Activated CD4-positive, alpha-beta T cell treated with anti-CD3 and anti-CD28 coated beads for 36 hours (primary cell): ENCODE measurements at regions of chr12 and their contacts with region 1.

Region 1: GRCh38 chr12:53625946-53626701 is at the start of gene ATF7:
- DNase-seq: peak; percentile 99
- ATAC-seq: peak; percentile 96
- H3K4me3 Mint-ChIP-seq: peak within 1 kb of the TSS; percentile 95
- H3K27ac Mint-ChIP-seq: peak within 1 kb of the TSS; percentile 84
- H3K4me1 Mint-ChIP-seq: peaks cover 35% of the 10 kb centered on the region
- H3K27me3 Mint-ChIP-seq: no peaks in the 10 kb centered on the region
- total RNA-seq, gene ATF7: 23.0 to 28.1 TPM

Region 2: DNA sequence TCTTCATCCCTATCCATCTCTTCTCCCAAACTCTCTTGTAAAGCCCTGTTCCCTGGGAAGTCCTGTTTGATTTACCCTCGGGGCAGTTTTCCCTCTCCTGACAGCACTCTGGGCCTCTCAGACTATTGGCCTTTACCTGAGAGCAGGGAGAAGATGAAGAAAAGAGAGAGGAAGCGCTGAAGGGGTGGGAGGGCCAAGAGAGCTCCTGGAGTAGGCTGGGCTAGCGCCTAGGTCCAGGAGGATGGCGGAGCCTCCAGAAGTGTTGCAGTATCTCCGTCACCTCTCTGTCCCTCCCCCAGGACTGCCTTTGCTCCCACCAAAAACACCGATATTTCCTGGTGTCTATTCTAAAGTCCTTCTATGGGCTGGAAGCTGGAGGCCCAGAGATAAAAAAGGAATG is 534.4 kb before region 1 on chr12:
- CTCF ChIA-PET with region 1: no interaction called
- POLR2A ChIA-PET with region 1: no interaction called
- intact Hi-C with region 1: no loop called
- DNase-seq: no peak
- ATAC-seq: no peak
- H3K4me3 Mint-ChIP-seq: no peak overlapping the region
- H3K27ac Mint-ChIP-seq: no peak overlapping the region
- H3K4me1 Mint-ChIP-seq: peaks cover under 1% of the 10 kb centered on the region
- H3K27me3 Mint-ChIP-seq: peaks cover 9% of the 10 kb centered on the region

Region 3: DNA sequence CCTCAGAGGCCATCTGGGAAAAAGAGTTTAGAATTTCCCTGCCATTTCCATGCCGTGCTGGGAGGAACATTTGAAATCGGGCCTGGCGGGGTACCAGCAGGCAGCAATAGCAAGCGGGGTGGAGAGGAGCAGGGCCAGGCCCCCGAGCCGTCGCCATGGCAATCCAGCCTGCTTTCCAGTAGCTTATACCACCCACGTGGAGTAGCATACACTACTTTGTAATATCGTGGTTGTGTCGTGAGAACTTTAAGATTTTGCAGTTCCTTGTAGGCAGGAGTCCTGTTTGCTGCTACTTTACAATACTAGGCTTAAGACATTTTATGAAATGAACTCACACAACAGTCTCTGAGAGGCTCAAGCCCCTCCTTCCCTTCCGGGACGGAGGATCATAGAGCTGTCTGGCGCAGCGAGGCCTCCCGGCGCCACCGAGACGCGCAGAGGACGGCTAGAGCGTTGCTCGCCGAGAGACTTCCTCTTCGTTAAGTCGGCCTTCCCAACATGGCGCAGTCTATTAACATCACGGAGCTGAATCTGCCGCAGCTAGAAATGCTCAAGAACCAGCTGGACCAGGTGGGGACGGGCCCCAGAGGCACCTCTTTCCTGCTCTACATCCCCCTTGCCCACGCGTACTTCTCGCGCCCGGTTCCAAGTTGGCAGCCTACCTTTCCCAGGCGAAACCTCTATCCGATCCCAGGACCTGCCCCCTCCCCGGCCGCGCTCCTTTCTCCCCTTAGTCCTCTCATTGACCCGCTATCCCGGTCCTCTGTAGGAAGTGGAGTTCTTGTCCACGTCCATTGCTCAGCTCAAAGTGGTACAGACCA is 330.8 kb before region 1 on chr12 and contains the start of gene PFDN5:
- CTCF ChIA-PET with region 1: no interaction called
- POLR2A ChIA-PET with region 1: no interaction called
- intact Hi-C with region 1: loop called in 1 of 2 experiments (anchors 1 kb)
- DNase-seq: peak; percentile 93
- ATAC-seq: peak; percentile 88
- H3K4me3 Mint-ChIP-seq: peak within 1 kb of the TSS; percentile 85
- H3K27ac Mint-ChIP-seq: peak within 1 kb of the TSS; percentile 94
- H3K4me1 Mint-ChIP-seq: peaks cover 52% of the 10 kb centered on the region
- H3K27me3 Mint-ChIP-seq: no peaks in the 10 kb centered on the region
- total RNA-seq, gene PFDN5: 253 to 322 TPM

Region 4: DNA sequence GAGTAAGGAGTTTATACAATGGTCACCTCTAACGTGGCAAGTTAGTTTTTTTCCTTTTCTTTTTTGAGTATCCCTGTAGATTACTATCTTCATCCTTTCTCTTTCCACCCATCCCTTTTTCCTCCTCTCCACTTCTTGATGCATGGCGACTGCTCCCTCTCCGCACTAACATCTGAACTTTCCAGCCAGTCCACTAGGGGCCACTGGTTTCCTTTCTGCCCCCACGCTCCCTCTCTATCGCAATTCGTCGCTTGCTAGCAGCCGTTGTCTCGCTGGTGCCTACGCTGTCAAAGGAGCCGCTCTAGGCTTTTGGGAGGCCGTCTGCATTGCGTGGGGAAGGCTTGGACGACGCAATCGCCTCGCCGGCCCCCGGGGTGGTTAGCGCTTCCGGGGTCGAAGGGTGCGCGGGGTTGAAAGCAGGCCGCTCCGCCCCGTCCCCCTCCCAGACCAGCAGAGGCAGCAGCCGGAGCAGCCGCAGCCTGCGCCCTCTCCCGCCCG is 174.4 kb before region 1 on chr12 and contains the start of gene PCBP2:
- CTCF ChIA-PET with region 1: no interaction called
- POLR2A ChIA-PET with region 1: no interaction called
- intact Hi-C with region 1: loop called in 1 of 2 experiments (anchors 1 kb)
- DNase-seq: peak; percentile 99
- ATAC-seq: peak; percentile 97
- H3K4me3 Mint-ChIP-seq: peak within 1 kb of the TSS; percentile 94
- H3K27ac Mint-ChIP-seq: peak within 1 kb of the TSS; percentile 96
- H3K4me1 Mint-ChIP-seq: peaks cover 27% of the 10 kb centered on the region
- H3K27me3 Mint-ChIP-seq: no peaks in the 10 kb centered on the region
- total RNA-seq, gene PCBP2: 881 to 999 TPM

Region 5: GRCh38 chr12:53500776-53501614 is 125.1 kb before region 1 on chr12 and contains the start of gene TARBP2:
- CTCF ChIA-PET with region 1: interaction called, 3 read pairs
- POLR2A ChIA-PET with region 1: interaction called, 4 read pairs
- intact Hi-C with region 1: loop called in 1 of 2 experiments (anchors 1 kb)
- DNase-seq: peak; percentile 98
- ATAC-seq: peak; percentile 84
- H3K4me3 Mint-ChIP-seq: peak within 1 kb of the TSS; percentile 81
- H3K27ac Mint-ChIP-seq: peak within 1 kb of the TSS; percentile 98
- H3K4me1 Mint-ChIP-seq: peaks cover 31% of the 10 kb centered on the region
- H3K27me3 Mint-ChIP-seq: no peaks in the 10 kb centered on the region
- total RNA-seq, gene TARBP2: 28.3 to 30.2 TPM

Region 6: GRCh38 chr12:53514628-53515290 is 111.4 kb before region 1 on chr12:
- CTCF ChIA-PET with region 1: no interaction called
- POLR2A ChIA-PET with region 1: no interaction called
- intact Hi-C with region 1: no loop called
- DNase-seq: no peak
- ATAC-seq: no peak
- H3K4me3 Mint-ChIP-seq: no peak overlapping the region
- H3K27ac Mint-ChIP-seq: no peak overlapping the region
- H3K4me1 Mint-ChIP-seq: no peaks in the 10 kb centered on the region
- H3K27me3 Mint-ChIP-seq: no peaks in the 10 kb centered on the region

Region 7: GRCh38 chr12:53561590-53561953 is 64.6 kb before region 1 on chr12:
- CTCF ChIA-PET with region 1: interaction called, 3 read pairs
- POLR2A ChIA-PET with region 1: interaction called, 3 read pairs
- intact Hi-C with region 1: loop called (anchors 1 to 5 kb)
- DNase-seq: no peak
- ATAC-seq: peak; percentile 93
- H3K4me3 Mint-ChIP-seq: no peak overlapping the region
- H3K27ac Mint-ChIP-seq: peak overlapping the region; percentile 76
- H3K4me1 Mint-ChIP-seq: peaks cover 63% of the 10 kb centered on the region
- H3K27me3 Mint-ChIP-seq: no peaks in the 10 kb centered on the region

Region 8: GRCh38 chr12:53613821-53614220 is 12.3 kb before region 1 on chr12:
- CTCF ChIA-PET with region 1: interaction called, 16 read pairs
- POLR2A ChIA-PET with region 1: interaction called, 12 read pairs
- intact Hi-C with region 1: no loop called
- DNase-seq: no peak
- ATAC-seq: no peak
- H3K4me3 Mint-ChIP-seq: no peak overlapping the region
- H3K27ac Mint-ChIP-seq: no peak overlapping the region
- H3K4me1 Mint-ChIP-seq: peaks cover 29% of the 10 kb centered on the region
- H3K27me3 Mint-ChIP-seq: no peaks in the 10 kb centered on the region

Region 9: DNA sequence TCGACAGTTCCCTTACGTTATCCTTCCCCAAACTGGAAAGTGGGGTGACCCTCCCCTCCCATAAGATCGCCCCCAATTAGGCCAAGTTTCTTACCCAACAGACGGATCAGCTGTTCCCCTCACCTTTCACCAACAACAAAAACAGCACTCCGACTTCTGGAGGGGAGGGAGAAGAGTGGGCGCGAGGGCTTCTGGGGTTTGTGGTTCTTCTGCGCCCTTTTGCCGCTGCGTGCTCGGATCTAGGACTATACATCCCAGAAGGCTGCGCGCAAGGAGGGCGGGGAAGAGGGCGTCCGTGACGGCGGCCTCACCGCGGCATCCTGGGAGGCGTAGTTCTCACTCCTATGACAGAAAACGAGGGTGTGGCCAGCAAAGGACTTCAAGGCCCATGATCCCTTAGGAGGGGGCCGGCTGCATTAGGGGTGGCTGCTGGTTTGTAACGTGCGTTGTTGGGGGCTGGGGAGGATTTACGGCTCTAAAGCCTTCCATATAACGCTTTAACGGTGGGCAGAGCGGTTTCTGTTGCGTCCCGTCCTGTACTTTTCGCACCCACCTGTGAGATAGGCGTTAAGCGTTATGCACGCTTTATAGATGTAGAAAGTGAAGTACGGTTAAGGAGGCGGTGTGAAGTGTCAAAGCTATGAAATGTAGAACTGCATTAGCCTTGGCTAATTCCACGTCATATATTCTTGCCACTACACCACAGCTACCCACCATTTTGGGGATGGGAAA is 101.4 kb after region 1 on chr12 and contains the start of gene CALCOCO1:
- CTCF ChIA-PET with region 1: no interaction called
- POLR2A ChIA-PET with region 1: no interaction called
- intact Hi-C with region 1: loop called (anchors 1 kb)
- DNase-seq: peak; percentile 99
- ATAC-seq: peak; percentile 99
- H3K4me3 Mint-ChIP-seq: peak within 1 kb of the TSS; percentile 80
- H3K27ac Mint-ChIP-seq: peak within 1 kb of the TSS; percentile 73
- H3K4me1 Mint-ChIP-seq: peaks cover 20% of the 10 kb centered on the region
- H3K27me3 Mint-ChIP-seq: no peaks in the 10 kb centered on the region
- total RNA-seq, gene CALCOCO1: 17.1 to 20.4 TPM